Vagina (tissue), 2 donors: ENCODE measurements at regions of chr19 and their contacts with region 1.

Region 1: GRCh38 chr19:57452307-57452706 is 4.6 kb downstream of the VN1R1 start:
- DNase-seq: no peak
- H3K4me3 ChIP-seq: no peak overlapping the region
- H3K27ac ChIP-seq: no peak overlapping the region
- H3K4me1 ChIP-seq: no peaks in the 10 kb centered on the region
- H3K27me3 ChIP-seq: no peaks in the 10 kb centered on the region
- CTCF ChIP-seq: no peak
- POLR2A ChIP-seq: no peak

Region 2: DNA sequence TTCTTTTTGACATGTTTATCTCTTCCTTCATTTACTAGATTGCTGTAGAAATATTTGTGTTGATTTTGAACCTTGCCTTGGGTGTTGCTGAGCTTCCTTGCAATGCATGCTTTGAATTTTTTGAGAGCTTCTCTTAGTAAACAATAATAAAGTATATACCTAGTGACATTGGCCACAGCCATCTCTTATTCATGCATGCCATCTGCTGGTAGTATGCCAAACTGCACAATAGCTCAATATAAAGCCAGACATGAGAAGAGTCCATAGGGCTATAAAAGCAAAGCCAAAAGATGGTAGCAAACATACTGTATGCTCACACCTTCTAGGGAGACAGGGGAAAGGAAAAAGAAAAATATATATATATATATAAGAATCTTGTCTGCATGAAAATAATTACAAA is 1118.8 kb before region 1 on chr19:
- intact Hi-C with region 1: loop called (anchors 5 kb)
- DNase-seq: no peak
- H3K4me3 ChIP-seq: no peak overlapping the region
- H3K27ac ChIP-seq: no peak overlapping the region
- H3K4me1 ChIP-seq: no peaks in the 10 kb centered on the region
- H3K27me3 ChIP-seq: no peaks in the 10 kb centered on the region
- CTCF ChIP-seq: peak in 2 of 3 experiments; percentile 32 to 53
- POLR2A ChIP-seq: no peak

Region 3: DNA sequence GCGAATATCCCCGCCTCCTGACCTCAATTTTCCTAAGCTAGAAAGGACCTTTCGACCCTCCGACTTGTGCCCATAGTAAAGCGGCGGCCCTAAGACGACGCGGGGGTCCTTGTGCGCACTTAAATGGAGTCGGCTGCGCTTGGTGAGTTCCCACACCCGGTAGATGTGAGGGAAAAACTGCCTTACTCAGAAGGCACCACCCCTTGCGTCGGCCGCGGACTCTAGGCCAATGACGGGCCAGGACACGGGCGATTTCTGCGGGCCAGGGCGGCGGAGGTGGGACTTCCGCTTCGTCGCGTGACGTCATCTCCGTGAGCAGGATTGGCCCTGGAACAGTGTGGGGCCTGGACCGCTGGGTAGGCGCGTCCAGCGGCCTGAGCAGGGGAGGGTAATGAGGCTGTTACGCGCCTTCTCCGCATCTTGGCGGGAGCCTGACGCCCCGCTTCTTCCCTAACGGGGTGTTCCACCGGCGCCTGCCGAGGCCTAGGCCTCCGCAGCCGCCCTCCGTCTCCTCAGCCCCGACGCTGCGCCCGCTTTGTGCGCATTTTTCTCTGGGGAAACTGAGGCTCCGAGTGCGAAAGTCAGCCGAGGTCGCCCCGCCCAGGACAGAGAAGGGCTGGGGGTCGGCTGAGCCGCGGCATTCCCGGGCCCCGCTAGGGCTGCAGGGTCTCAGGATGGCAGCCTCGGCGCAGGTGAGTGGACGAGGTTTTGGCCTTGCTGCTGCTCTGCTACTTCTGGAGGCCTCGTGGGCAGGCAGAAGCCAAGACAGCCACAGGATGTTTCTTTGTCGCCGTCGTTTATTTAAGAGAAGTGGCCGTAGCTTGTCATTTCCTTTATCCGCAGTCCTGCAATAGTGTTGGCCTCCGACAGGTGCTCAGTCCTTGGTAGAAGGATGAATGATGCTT is 131.9 kb before region 1 on chr19 and contains the start of gene ZNF543:
- intact Hi-C with region 1: no loop called
- DNase-seq: peak in 1 of 2 donors; percentile 91
- H3K4me3 ChIP-seq: peak within 1 kb of the TSS; percentile 85 to 87
- H3K27ac ChIP-seq: peak within 1 kb of the TSS; percentile 73
- H3K4me1 ChIP-seq: peaks cover 20% of the 10 kb centered on the region
- H3K27me3 ChIP-seq: no peaks in the 10 kb centered on the region
- CTCF ChIP-seq: peak in 1 of 3 experiments; percentile 23
- POLR2A ChIP-seq: peak in 1 of 2 donors; percentile 25
- total RNA-seq, gene ZNF543: 6.9 TPM

Region 4: GRCh38 chr19:57350877-57351805 is 101.2 kb before region 1 on chr19 and contains the start of gene ZNF304:
- intact Hi-C with region 1: no loop called
- DNase-seq: no peak
- H3K4me3 ChIP-seq: peak within 1 kb of the TSS; percentile 54 to 72
- H3K27ac ChIP-seq: peak within 1 kb of the TSS; percentile 32
- H3K4me1 ChIP-seq: peaks cover 13% of the 10 kb centered on the region
- H3K27me3 ChIP-seq: no peaks in the 10 kb centered on the region
- CTCF ChIP-seq: no peak
- POLR2A ChIP-seq: no peak
- total RNA-seq, gene ZNF304: 5.9 TPM